Adrenal gland (tissue), 19 donors: ENCODE measurements at regions of chr14 and their contacts with region 1.

Region 1: GRCh38 chr14:105346876-105347586 is 32.5 kb downstream of the PACS2 start:
- DNase-seq: no peak
- H3K4me3 ChIP-seq: no peak overlapping the region
- H3K27ac ChIP-seq: no peak overlapping the region
- H3K4me1 ChIP-seq: peaks cover 0 to 4% of the 10 kb centered on the region in 2 donors
- H3K27me3 ChIP-seq: no peaks in the 10 kb centered on the region
- CTCF ChIP-seq: no peak
- POLR2A ChIP-seq: no peak

Region 2: DNA sequence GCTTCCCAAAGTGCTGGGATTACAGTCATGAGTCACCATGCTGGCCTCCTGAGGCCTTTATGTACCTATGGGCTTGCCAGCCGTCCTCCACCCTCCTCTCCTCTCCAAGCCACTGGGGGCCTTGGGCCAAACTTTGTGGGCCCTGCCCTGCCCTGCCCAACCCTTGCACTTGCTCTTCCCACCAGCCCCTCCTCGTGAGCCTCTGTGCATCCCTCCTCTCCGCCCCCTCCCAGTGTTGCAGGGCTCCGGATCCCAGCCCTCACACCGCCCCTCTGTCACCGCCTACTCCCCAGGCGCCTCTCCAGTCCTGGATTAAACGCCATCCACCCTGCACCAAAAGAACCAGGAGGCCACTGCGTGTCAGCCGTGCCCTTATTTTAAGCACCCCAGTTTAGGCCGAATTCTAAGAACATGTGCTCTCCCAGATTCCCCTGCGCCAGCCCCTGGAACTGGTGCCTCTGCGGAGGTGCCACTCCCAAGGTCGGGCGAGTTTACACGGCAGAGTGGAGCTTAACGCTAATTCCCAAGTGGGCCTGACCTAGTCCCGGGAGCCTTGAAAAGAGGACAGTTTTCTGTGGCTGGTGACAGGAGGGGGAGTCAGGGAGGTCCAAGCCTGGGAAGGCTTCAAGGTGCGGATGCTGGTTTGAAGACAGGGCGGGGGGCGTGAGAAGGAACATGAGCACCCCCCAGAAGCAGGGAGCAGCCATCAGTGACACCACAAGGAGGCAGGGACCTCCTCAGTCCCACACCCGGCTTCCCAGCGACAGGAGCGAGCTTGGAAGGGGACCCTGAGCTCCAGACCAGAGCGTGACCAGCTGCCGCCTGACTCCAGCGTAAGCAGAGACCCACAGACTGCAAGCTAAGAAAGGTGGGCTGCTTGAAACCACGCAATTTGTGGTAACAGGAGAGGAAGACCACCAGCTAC is 304.9 kb before region 1 on chr14:
- intact Hi-C with region 1: no loop called
- DNase-seq: no peak
- H3K4me3 ChIP-seq: no peak overlapping the region
- H3K27ac ChIP-seq: no peak overlapping the region
- H3K4me1 ChIP-seq: no peaks in the 10 kb centered on the region
- H3K27me3 ChIP-seq: no peaks in the 10 kb centered on the region
- CTCF ChIP-seq: no peak
- POLR2A ChIP-seq: no peak

Region 3: GRCh38 chr14:105090493-105091053 is 256.5 kb before region 1 on chr14:
- intact Hi-C with region 1: loop called in 1 of 2 experiments (anchors 5 kb)
- DNase-seq: peak; percentile 76 to 88 (median 82)
- H3K4me3 ChIP-seq: no peak overlapping the region
- H3K27ac ChIP-seq: no peak overlapping the region
- H3K4me1 ChIP-seq: peaks cover 10 to 31% of the 10 kb centered on the region in 2 donors
- H3K27me3 ChIP-seq: peaks cover 13% of the 10 kb centered on the region
- CTCF ChIP-seq: peak; percentile 76 to 98 (median 90)
- POLR2A ChIP-seq: no peak

Region 4: DNA sequence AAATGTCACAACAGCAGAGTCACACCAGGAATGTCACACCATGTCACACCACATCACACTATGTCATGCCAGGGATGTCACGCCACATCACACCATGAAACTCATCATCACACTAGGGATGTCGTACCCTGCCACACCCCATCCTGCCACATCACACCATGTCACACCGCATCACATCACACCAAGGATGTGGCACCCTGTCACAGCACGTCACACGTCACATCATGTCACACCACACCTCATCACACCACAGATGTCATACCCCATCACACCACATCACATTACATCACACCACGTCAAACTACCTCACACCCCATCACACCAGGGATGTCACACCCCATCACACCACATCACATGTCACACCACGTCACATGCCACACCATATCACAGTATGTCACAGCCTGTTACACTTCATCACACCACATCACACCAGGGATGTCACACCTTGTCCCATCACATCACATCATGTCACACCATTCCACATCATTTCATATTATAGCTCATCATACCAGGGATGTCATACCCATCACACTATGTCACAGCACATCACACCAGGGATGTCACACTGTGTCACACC is 270.3 kb after region 1 on chr14:
- intact Hi-C with region 1: no loop called
- DNase-seq: no peak
- H3K4me3 ChIP-seq: no peak overlapping the region
- H3K27ac ChIP-seq: no peak overlapping the region
- H3K4me1 ChIP-seq: no peaks in the 10 kb centered on the region
- H3K27me3 ChIP-seq: peaks cover 5% of the 10 kb centered on the region
- CTCF ChIP-seq: no peak
- POLR2A ChIP-seq: no peak